ENCODE measurements at regions of chr16 and their contacts with region 1.

Region 1: GRCh38 chr16:27179500-27180072 is 23.7 kb upstream of the KDM8 start:
- DNase-seq: peak; percentile 81 to 86 (median 85)
- H3K4me3 ChIP-seq: no peak overlapping the region
- H3K4me3 Mint-ChIP-seq: peak overlapping the region in 3 of 8 donors; percentile 0 to 64 (median 22)
- H3K27ac ChIP-seq: no peak overlapping the region
- H3K27ac Mint-ChIP-seq: peak overlapping the region; percentile 1 to 93 (median 85)
- H3K4me1 ChIP-seq: peaks cover 25% of the 10 kb centered on the region
- H3K4me1 Mint-ChIP-seq: peaks cover 21 to 46% (median 31%) of the 10 kb centered on the region in 4 donors
- H3K27me3 ChIP-seq: no peaks in the 10 kb centered on the region
- H3K27me3 Mint-ChIP-seq: no peaks in the 10 kb centered on the region

Region 2: GRCh38 chr16:27154705-27155521 is 24.7 kb before region 1 on chr16:
- CTCF ChIA-PET with region 1: interaction called, 415 read pairs
- POLR2A ChIA-PET with region 1: interaction called, 3 read pairs
- intact Hi-C with region 1: loop called (anchors 1 kb)
- DNase-seq: peak; percentile 46 to 60 (median 53)
- H3K4me3 ChIP-seq: no peak overlapping the region
- H3K4me3 Mint-ChIP-seq: peak overlapping the region in 2 of 8 donors; percentile 19 to 48
- H3K27ac ChIP-seq: no peak overlapping the region
- H3K27ac Mint-ChIP-seq: peak overlapping the region in 5 of 7 donors; percentile 35 to 72 (median 64)
- H3K4me1 ChIP-seq: peaks cover 8% of the 10 kb centered on the region
- H3K4me1 Mint-ChIP-seq: peaks cover 3 to 9% (median 5%) of the 10 kb centered on the region in 4 donors
- H3K27me3 ChIP-seq: no peaks in the 10 kb centered on the region
- H3K27me3 Mint-ChIP-seq: no peaks in the 10 kb centered on the region

Region 3: GRCh38 chr16:27208796-27209195 is 29.2 kb after region 1 on chr16:
- CTCF ChIA-PET with region 1: interaction called, 56 read pairs
- POLR2A ChIA-PET with region 1: interaction called, 50 read pairs
- intact Hi-C with region 1: no loop called
- DNase-seq: no peak
- H3K4me3 ChIP-seq: no peak overlapping the region
- H3K4me3 Mint-ChIP-seq: no peak overlapping the region
- H3K27ac ChIP-seq: no peak overlapping the region
- H3K27ac Mint-ChIP-seq: peak overlapping the region in 1 of 7 donors; percentile 29
- H3K4me1 ChIP-seq: peaks cover 16% of the 10 kb centered on the region
- H3K4me1 Mint-ChIP-seq: peaks cover 4 to 17% (median 8%) of the 10 kb centered on the region in 4 donors
- H3K27me3 ChIP-seq: no peaks in the 10 kb centered on the region
- H3K27me3 Mint-ChIP-seq: no peaks in the 10 kb centered on the region

Region 4: GRCh38 chr16:27318392-27319226 is 139.0 kb after region 1 on chr16:
- CTCF ChIA-PET with region 1: interaction called, 11 read pairs
- POLR2A ChIA-PET with region 1: interaction called, 3 read pairs
- intact Hi-C with region 1: loop called (anchors 1 kb)
- DNase-seq: peak; percentile 32 to 78 (median 35)
- H3K4me3 ChIP-seq: peak overlapping the region; percentile 8 to 37
- H3K4me3 Mint-ChIP-seq: peak overlapping the region; percentile 89 to 98 (median 94)
- H3K27ac ChIP-seq: peak overlapping the region; percentile 96
- H3K27ac Mint-ChIP-seq: peak overlapping the region; percentile 94 to 99 (median 99)
- H3K4me1 ChIP-seq: peaks cover 82% of the 10 kb centered on the region
- H3K4me1 Mint-ChIP-seq: peaks cover 59 to 90% (median 78%) of the 10 kb centered on the region in 4 donors
- H3K27me3 ChIP-seq: no peaks in the 10 kb centered on the region
- H3K27me3 Mint-ChIP-seq: no peaks in the 10 kb centered on the region

Region 5: GRCh38 chr16:27374804-27375425 is 195.3 kb after region 1 on chr16:
- CTCF ChIA-PET with region 1: interaction called, 139 read pairs
- POLR2A ChIA-PET with region 1: interaction called, 4 read pairs
- intact Hi-C with region 1: no loop called
- DNase-seq: peak in 3 of 5 donors; percentile 15 to 60 (median 28)
- H3K4me3 ChIP-seq: no peak overlapping the region
- H3K4me3 Mint-ChIP-seq: no peak overlapping the region
- H3K27ac ChIP-seq: no peak overlapping the region
- H3K27ac Mint-ChIP-seq: no peak overlapping the region
- H3K4me1 ChIP-seq: peaks cover 67% of the 10 kb centered on the region
- H3K4me1 Mint-ChIP-seq: peaks cover 21 to 33% (median 26%) of the 10 kb centered on the region in 4 donors
- H3K27me3 ChIP-seq: no peaks in the 10 kb centered on the region
- H3K27me3 Mint-ChIP-seq: no peaks in the 10 kb centered on the region

Region 6: DNA sequence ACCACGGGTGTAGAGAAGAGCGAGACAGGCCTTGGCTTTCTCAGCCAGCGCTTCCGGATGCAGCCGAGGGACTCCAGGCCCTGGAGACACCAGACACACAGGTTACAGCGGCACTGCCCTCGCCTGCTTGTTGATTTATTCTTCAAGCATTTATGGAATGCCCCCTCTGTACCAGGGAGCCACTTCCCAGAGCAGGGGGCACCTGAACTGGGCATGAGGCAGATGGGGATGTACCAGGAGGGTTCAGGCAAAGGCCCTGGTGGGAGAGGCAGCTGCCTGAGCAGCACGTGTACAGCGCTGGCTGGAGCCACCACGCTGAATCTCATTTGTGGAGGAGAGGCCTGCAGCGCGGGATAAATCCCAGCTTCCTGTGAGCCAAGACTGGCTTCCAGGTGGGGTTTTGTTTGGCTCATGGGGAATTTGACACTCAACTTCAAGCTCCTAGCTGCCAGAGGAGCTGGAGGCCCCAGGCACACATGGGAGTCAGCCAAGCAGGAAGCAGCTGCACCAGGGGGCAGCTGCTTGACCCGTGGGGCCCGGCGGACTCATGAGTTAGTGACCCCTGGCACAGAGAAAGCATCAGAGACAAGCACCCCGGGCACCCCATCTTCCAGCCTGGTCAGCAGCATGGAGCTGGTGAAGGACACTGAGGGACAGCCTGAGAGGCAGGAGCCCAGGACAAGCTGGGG is 282.0 kb after region 1 on chr16:
- CTCF ChIA-PET with region 1: interaction called, 11 read pairs
- POLR2A ChIA-PET with region 1: interaction called, 9 read pairs
- intact Hi-C with region 1: loop called (anchors 1 kb)
- DNase-seq: no peak
- H3K4me3 ChIP-seq: no peak overlapping the region
- H3K4me3 Mint-ChIP-seq: peak overlapping the region in 1 of 8 donors; percentile 57
- H3K27ac ChIP-seq: no peak overlapping the region
- H3K27ac Mint-ChIP-seq: peak overlapping the region in 5 of 7 donors; percentile 12 to 81 (median 77)
- H3K4me1 ChIP-seq: peaks cover 61% of the 10 kb centered on the region
- H3K4me1 Mint-ChIP-seq: peaks cover 34 to 67% (median 50%) of the 10 kb centered on the region in 4 donors
- H3K27me3 ChIP-seq: no peaks in the 10 kb centered on the region
- H3K27me3 Mint-ChIP-seq: no peaks in the 10 kb centered on the region

Measured in CD4-positive, alpha-beta memory T cell (primary cell).